ENCODE measurements at regions of chr3 and their contacts with region 1.

Region 1: DNA sequence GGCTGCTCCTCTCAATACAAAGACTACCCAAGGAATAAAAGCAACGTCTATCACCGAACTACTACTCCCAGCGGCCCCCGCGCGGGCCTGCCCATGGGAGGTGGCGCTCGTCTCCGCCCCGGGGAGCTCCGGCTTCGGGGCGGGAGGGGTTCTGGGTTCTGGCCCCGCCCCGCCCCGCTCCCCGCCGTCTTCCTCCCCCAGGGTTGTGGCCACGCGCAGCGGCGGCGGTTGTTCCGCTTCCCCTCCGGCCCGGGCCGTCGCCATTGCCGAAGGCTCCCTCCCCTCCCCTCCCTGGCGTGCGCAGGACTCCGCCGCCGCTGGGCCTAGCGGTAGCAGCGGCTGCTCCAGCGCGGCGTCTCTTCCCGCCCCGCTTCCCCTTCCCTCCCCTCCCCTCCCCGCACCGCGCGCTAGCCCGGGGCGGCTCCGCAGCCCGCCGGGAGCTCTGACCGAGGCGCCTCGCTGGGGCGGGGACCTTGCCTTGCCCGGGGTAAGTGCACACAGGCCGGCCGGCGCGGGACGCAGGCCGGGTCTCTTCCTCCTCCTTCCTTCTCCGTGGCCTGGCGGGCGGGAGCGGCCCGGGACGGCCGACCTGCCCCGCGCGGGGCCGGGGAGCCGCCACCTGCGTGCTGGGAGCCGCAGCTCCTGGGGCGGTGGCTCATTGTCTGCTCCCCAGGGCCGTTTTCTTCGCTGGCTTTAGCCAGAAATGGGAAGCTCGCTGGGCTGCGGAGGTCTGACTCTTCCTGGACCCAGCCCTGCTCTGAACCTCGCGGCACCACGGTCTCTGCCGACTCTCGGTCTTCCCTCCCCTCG is at the start of gene PAK2:
- DNase-seq: peak; percentile 92
- H3K4me3 Mint-ChIP-seq: peak within 1 kb of the TSS; percentile 98
- H3K27ac Mint-ChIP-seq: peak within 1 kb of the TSS; percentile 96
- H3K4me1 Mint-ChIP-seq: peaks cover 28% of the 10 kb centered on the region
- H3K27me3 Mint-ChIP-seq: no peaks in the 10 kb centered on the region
- total RNA-seq, gene PAK2: 98.4 to 101 TPM

Region 2: DNA sequence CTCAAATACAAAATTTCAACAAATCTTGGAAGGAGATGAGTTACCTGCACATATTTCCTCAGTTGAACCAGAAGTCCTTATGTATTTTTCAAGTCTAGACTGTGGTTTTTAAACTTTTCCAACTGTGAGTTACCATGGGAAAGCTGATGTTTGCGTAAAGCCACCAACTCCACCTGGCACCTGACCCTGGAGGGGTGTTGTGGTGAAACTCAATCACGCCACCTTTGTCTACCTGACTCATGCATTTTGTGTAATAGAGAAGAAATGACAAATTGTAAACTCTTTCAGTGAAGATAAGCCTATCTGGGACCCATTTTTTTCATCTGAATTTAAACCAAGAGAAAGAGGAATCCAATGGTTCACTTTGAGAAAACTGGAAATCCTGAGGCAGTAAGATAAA is 256.7 kb before region 1 on chr3:
- CTCF ChIA-PET with region 1: no interaction called
- POLR2A ChIA-PET with region 1: no interaction called
- intact Hi-C with region 1: no loop called
- DNase-seq: no peak
- H3K4me3 Mint-ChIP-seq: no peak overlapping the region
- H3K27ac Mint-ChIP-seq: no peak overlapping the region
- H3K4me1 Mint-ChIP-seq: no peaks in the 10 kb centered on the region
- H3K27me3 Mint-ChIP-seq: no peaks in the 10 kb centered on the region

Region 3: DNA sequence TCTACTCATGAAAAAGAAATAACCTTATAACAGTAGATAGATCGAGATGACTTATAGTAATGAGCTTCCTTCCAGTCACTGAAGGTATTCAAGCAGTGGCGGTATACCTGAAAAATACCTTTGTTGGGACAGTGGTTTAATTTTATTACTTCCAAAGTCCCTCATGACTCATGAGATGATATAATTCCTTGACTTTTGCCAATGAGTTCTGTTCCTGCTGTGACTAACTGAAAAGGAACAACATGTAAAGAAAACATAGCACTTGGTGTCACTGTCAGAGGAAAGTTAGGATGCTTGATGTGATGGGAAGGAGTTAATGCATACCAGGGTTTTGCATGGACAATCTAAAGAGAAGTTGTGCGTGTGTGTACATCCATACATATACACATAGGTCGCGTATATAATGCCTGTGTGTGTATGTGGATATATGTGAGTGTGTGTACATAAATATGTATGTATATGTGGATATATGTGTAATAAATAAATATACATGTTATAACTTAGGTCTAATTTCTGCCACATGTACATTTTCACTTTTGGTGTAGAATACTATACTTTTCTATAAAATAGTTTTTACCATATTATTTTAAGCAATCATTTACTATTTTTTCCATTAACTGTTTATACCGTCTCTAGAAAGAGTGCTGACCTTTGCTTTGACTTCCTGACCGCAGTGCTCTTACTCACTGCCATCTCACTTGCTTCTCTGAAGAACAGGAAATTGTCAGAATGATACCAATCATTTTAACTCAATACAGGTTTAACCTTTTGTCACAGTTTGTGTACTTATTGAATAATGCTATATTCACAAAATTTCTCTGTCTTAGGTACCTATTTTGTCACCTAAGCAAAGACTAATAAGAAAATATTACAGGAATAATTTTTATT is 12.8 kb before region 1 on chr3:
- CTCF ChIA-PET with region 1: no interaction called
- POLR2A ChIA-PET with region 1: no interaction called
- intact Hi-C with region 1: loop called (anchors 1 kb)
- DNase-seq: peak; percentile 66
- H3K4me3 Mint-ChIP-seq: no peak overlapping the region
- H3K27ac Mint-ChIP-seq: peak overlapping the region; percentile 73
- H3K4me1 Mint-ChIP-seq: peaks cover 26% of the 10 kb centered on the region
- H3K27me3 Mint-ChIP-seq: no peaks in the 10 kb centered on the region

Region 4: DNA sequence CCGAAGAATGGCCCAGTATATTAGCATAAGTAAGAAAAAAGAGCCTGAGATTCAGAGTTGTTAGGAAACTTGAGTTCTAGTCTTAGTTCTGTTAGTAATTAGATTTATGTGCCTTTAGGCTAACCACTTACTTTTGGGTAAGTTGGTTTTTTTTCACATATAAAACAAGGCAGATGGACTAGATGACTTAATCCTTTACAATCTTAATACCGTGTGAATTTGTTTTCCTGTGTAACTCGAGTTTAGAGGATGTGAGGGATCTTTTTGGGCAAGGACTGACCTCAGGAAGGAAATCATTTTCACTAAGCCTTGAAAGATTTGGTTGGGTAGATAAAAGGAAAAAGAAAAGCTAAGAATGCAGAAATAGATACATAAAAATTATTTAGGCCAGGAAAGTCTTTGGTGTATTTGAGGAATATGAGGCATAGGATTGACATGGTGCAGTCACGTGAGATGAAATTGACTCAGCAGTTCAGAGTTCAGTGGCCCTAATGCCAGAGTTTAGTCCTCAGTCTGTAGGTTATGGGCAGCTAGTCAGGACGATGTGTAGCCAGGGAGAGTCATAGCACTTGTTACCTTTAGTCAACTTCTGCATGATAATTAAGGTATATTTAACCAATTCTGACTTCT is 34.4 kb after region 1 on chr3:
- CTCF ChIA-PET with region 1: no interaction called
- POLR2A ChIA-PET with region 1: no interaction called
- intact Hi-C with region 1: no loop called
- DNase-seq: peak; percentile 22
- H3K4me3 Mint-ChIP-seq: no peak overlapping the region
- H3K27ac Mint-ChIP-seq: peak overlapping the region; percentile 4
- H3K4me1 Mint-ChIP-seq: peaks cover 72% of the 10 kb centered on the region
- H3K27me3 Mint-ChIP-seq: no peaks in the 10 kb centered on the region

Region 5: GRCh38 chr3:196803891-196804468 is 64.1 kb after region 1 on chr3:
- CTCF ChIA-PET with region 1: no interaction called
- POLR2A ChIA-PET with region 1: no interaction called
- intact Hi-C with region 1: loop called (anchors 5 kb)
- DNase-seq: no peak
- H3K4me3 Mint-ChIP-seq: no peak overlapping the region
- H3K27ac Mint-ChIP-seq: peak overlapping the region; percentile 69
- H3K4me1 Mint-ChIP-seq: peaks cover 16% of the 10 kb centered on the region
- H3K27me3 Mint-ChIP-seq: no peaks in the 10 kb centered on the region

Measured in activated CD4-positive, alpha-beta memory T cell treated with anti-CD3 and anti-CD28 coated beads for 36 hours (primary cell).